ENCODE measurements at regions of chr7 and their contacts with region 1.

Region 1: DNA sequence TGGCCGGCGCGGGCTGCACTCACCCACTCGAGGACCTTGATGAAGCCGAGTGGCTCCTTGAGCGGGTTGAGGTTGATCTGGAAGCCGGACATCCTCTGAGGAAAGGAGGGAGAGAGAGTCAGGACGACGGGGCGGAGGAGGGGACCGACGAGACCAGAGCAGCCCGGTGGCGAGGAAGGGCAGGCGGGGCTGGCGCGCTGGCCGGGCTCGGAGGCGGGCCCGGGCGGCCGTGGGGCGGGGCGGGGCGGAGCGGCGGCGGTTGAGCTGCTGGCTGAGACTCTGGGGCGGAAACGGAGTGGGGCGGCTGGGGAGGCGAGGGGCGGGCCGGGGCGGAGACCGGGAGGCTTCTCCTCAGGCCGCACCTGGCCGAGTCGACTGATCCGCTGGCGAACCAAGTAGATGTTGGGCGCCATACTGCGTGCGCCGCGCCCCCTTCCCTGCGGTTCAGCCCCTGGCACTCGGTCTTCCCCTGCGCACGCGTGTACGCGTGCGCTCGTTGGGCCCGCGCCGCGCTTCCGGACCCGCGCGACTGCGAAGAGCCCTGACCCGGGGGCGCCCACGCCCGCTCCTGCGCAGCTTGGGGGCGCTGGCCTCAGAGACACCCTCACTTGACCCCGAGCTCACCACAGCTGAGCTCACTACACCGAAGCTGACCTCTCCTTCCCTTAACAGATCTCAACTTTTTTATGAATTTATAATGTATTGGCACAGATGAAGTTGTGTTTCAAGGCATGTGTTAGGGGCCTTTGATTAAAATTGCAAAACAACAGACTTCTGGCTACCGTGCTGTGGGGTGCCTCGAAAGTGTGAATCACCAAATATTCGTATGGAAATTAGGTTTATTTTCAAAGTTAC is at the start of gene SYPL1:
- DNase-seq: peak; percentile 94
- H3K4me3 Mint-ChIP-seq: peak within 1 kb of the TSS; percentile 85
- H3K27ac Mint-ChIP-seq: peak within 1 kb of the TSS; percentile 92
- H3K4me1 Mint-ChIP-seq: peaks cover 71% of the 10 kb centered on the region
- H3K27me3 Mint-ChIP-seq: no peaks in the 10 kb centered on the region
- total RNA-seq, gene SYPL1: 24.7 to 26.6 TPM

Region 2: DNA sequence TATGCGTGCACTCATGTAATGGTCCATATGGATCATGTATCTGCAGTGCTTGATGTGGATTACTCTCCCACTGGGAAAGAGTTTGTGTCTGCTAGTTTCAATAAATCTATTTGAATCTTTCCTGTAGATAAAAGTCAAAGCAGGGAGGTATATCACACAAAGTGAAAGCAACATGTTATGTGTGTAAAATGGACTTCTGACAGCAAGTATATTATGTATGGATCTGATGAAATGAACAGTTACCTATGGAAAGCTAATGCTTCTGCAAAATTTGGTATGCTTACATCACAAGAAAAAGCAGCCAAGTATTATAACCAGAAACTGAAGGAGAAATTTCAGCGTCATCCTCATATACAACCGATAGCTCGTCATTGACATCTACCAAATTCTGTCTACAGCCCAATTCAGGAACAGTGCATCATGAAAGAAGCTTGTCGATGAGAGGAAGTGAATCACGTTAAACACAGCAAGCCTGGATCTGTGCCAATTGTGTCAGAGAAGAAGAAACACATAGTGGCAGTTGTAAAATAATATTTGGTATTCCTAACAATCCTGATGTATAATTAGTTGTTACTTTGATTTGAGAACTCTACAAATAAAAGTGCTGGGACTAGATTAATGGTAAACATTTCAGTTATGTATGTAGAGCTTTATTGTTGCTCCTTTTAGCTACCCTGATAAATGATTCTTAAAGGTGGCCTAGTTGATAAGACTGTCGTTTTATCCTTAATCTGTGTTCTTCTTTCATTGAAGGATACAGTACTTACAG is 14.0 kb after region 1 on chr7:
- CTCF ChIA-PET with region 1: interaction called, 3 read pairs
- intact Hi-C with region 1: loop called (anchors 1 kb)
- DNase-seq: peak; percentile 85
- H3K4me3 Mint-ChIP-seq: peak overlapping the region; percentile 68
- H3K27ac Mint-ChIP-seq: peak overlapping the region; percentile 20
- H3K4me1 Mint-ChIP-seq: peaks cover 18% of the 10 kb centered on the region
- H3K27me3 Mint-ChIP-seq: no peaks in the 10 kb centered on the region

Region 3: DNA sequence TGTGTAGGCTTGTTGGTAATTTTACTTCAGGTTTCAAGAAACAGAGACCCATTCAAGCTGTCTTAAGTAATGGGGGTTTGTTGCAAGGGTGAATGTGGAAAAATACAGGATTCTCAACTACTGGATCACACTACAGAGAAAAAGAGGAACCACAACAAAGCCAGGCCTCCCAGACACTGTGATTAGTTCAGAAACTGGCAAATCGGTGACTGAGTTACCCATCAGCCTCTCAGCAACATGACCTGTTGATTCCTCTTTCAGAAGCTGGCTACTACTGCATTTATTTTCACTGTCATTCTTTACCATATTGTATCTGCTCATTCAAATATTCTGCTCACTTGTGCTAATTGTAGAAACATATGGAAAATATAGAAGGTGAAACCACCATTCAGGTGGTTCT is 532.7 kb after region 1 on chr7:
- CTCF ChIA-PET with region 1: no interaction called
- intact Hi-C with region 1: no loop called
- DNase-seq: no peak
- H3K4me3 Mint-ChIP-seq: no peak overlapping the region
- H3K27ac Mint-ChIP-seq: no peak overlapping the region
- H3K4me1 Mint-ChIP-seq: no peaks in the 10 kb centered on the region
- H3K27me3 Mint-ChIP-seq: peaks cover 2% of the 10 kb centered on the region